ENCODE measurements at regions of chr7 and their contacts with region 1.

Region 1: DNA sequence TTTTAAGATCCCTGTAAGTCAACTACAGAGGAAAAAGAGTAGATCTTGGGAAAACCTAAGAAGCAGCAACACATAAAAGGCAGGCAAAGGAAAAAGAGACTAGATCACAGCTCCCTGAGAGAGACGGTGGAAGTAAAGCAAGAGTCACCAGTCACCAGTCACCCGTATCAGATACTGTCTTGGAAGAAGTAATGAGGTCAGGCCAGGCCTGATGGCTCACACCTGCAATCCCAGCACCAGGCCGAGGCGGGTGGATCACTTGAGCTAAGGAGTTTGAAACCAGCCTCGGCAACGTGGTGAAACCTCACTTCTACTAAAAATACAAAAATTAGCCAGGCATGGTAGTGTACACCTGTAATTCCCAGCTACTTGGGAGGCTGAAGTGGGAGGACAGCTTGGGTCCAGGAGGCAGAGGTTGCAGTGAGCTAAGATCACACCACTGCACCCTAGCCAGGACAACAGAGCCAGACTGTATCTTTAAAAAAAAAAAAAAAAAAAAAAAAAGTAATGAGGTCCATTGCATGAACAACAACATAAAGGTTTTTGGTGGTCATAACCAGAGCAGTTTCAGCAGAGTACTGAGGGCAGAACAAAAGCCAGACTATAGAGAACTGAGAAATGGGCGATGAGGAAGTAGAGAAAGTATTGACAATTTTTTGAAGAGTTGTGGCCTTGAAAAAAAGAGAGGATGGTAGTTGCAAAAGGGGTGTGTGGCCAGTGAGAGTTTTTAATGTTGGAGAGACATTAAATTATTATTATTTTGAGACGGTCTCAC is 16.9 kb downstream of the ZNF713 start:
- DNase-seq: no peak
- H3K4me3 ChIP-seq: no peak overlapping the region
- H3K4me3 Mint-ChIP-seq: no peak overlapping the region
- H3K27ac Mint-ChIP-seq: no peak overlapping the region
- H3K4me1 ChIP-seq: peaks cover 5% of the 10 kb centered on the region
- H3K4me1 Mint-ChIP-seq: no peaks in the 10 kb centered on the region
- H3K27me3 ChIP-seq: no peaks in the 10 kb centered on the region
- H3K27me3 Mint-ChIP-seq: no peaks in the 10 kb centered on the region
- CTCF ChIP-seq: no peak

Region 2: DNA sequence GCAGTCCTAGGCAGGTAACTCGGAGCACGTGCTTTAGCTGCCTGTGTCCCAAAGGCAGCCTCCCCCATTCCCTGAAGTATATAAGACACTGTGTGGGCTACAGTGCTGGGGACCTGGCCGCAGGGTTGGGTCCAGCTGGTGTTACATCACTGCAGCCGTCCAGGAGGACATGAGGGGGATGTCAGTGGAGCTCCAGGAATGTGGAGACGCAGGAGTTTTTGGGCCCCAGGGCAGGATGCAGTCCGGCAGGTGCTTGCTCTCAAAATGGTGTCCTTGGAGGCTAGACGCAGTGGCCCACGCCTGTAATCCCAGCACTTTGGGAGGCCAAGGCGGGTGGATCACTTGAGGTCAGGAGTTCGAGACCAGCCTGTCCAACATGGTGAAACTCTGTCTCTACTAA is 28.9 kb before region 1 on chr7:
- CTCF ChIA-PET with region 1: interaction called, 11 read pairs
- POLR2A ChIA-PET with region 1: no interaction called
- intact Hi-C with region 1: no loop called
- DNase-seq: peak in 1 of 2 experiments; percentile 41
- H3K4me3 ChIP-seq: no peak overlapping the region
- H3K4me3 Mint-ChIP-seq: no peak overlapping the region
- H3K27ac Mint-ChIP-seq: no peak overlapping the region
- H3K4me1 ChIP-seq: no peaks in the 10 kb centered on the region
- H3K4me1 Mint-ChIP-seq: no peaks in the 10 kb centered on the region
- H3K27me3 ChIP-seq: no peaks in the 10 kb centered on the region
- H3K27me3 Mint-ChIP-seq: no peaks in the 10 kb centered on the region
- CTCF ChIP-seq: no peak